Activated CD8-positive, alpha-beta memory T cell treated with anti-CD3 and anti-CD28 coated beads, Interleukin-2, amount 10 ng/mL, durations not matched to agents 7 days and 5 days (primary cell): ENCODE measurements at regions of chr4 and their contacts with region 1.

Region 1: GRCh38 chr4:75995727-75996126 is 5.0 kb upstream of the SDAD1 start:
- DNase-seq: no peak
- ATAC-seq: peak; percentile 20
- H3K4me3 Mint-ChIP-seq: no peak overlapping the region
- H3K27ac Mint-ChIP-seq: no peak overlapping the region
- H3K4me1 Mint-ChIP-seq: peaks cover 19% of the 10 kb centered on the region
- H3K27me3 Mint-ChIP-seq: peaks cover 2% of the 10 kb centered on the region

Region 2: DNA sequence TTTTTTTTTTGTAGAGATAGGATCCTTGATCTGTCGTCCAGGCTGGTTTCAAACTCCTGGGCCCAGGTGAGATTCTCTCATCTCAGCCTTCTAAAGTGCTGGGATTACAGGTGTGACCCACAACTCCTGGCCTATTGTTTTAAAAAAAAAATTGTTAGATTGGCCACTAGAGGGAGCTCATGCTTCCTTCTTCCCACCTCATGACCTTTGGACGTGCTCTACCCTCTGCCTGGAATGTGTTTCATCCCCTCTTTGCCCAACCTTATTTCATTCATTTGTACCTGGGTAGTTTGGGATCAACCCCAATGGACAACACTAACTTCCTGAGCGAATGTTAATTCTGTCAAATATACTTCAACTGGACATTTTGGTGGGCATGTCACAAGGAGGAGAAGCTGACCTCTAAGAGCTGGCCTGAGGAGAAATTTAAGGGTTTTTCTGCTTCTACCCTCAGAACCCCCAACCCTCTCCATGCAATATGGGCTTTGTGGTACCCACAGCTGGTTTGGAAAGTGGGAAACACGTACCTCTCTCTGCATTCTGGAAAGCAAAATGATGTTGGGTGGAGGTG is 99.9 kb before region 1 on chr4:
- CTCF ChIA-PET with region 1: interaction called, 12 read pairs
- DNase-seq: no peak
- ATAC-seq: peak; percentile 70
- H3K4me3 Mint-ChIP-seq: no peak overlapping the region
- H3K27ac Mint-ChIP-seq: no peak overlapping the region
- H3K4me1 Mint-ChIP-seq: no peaks in the 10 kb centered on the region
- H3K27me3 Mint-ChIP-seq: peaks cover 9% of the 10 kb centered on the region

Region 3: GRCh38 chr4:76013540-76013939 is 17.8 kb after region 1 on chr4:
- CTCF ChIA-PET with region 1: interaction called, 10 read pairs
- DNase-seq: no peak
- ATAC-seq: no peak
- H3K4me3 Mint-ChIP-seq: no peak overlapping the region
- H3K27ac Mint-ChIP-seq: no peak overlapping the region
- H3K4me1 Mint-ChIP-seq: peaks cover 34% of the 10 kb centered on the region
- H3K27me3 Mint-ChIP-seq: peaks cover 3% of the 10 kb centered on the region

Region 4: DNA sequence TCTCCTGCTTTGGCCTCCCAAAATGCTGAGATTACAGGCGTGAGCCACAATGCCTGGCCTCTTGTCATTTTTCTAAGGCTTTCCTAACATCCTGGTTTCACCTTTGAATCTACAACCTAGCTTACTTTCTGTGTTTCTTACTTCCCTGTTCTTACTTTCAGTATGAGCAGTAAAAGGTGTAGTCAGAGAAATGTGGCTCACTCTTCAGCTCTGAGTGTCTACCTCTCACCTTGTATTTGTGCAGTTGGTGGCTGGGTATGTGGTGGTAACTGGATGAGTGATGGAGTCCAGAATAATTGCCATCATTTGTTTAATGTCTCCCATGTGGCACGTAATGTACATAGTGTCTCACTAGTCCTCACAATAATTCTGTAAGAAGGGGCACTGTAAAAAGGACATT is 59.3 kb after region 1 on chr4:
- CTCF ChIA-PET with region 1: interaction called, 28 read pairs
- DNase-seq: peak; percentile 67
- ATAC-seq: peak; percentile 73
- H3K4me3 Mint-ChIP-seq: no peak overlapping the region
- H3K27ac Mint-ChIP-seq: peak overlapping the region; percentile 58
- H3K4me1 Mint-ChIP-seq: peaks cover 57% of the 10 kb centered on the region
- H3K27me3 Mint-ChIP-seq: peaks cover 4% of the 10 kb centered on the region

Region 5: DNA sequence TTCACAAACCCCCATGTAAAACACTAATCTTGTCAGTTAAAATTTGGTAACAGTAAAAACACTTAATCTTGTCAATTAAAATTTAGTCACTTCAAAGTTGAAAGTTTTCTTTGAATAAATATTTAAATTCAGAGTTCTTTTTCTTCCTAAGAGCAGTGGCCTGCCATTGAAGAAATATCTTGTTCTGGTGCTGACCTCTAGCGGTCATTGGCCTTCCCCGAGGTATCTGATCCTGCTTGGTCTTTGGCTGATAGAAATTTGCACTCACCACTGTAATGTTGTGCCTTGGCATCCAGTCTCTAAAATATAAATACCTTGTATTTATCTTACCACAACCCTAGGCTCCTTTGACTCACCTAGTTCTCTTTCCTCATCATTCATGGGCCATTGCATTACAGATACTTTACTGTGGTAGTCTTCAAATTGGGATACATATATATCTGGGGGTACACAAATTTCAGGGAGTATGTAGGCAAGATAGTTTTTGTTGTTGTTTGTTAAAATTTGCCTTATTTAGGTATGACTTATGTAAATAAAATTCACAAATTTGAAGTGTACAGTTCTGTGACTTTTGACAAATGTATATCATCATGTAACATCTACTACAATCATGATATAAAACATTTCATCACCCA is 72.0 kb after region 1 on chr4:
- CTCF ChIA-PET with region 1: interaction called, 41 read pairs
- DNase-seq: peak; percentile 84
- ATAC-seq: peak; percentile 92
- H3K4me3 Mint-ChIP-seq: no peak overlapping the region
- H3K27ac Mint-ChIP-seq: no peak overlapping the region
- H3K4me1 Mint-ChIP-seq: peaks cover 5% of the 10 kb centered on the region
- H3K27me3 Mint-ChIP-seq: no peaks in the 10 kb centered on the region